GM12878 (cell line): ENCODE measurements at regions of chr6 and their contacts with region 1.

Region 1: DNA sequence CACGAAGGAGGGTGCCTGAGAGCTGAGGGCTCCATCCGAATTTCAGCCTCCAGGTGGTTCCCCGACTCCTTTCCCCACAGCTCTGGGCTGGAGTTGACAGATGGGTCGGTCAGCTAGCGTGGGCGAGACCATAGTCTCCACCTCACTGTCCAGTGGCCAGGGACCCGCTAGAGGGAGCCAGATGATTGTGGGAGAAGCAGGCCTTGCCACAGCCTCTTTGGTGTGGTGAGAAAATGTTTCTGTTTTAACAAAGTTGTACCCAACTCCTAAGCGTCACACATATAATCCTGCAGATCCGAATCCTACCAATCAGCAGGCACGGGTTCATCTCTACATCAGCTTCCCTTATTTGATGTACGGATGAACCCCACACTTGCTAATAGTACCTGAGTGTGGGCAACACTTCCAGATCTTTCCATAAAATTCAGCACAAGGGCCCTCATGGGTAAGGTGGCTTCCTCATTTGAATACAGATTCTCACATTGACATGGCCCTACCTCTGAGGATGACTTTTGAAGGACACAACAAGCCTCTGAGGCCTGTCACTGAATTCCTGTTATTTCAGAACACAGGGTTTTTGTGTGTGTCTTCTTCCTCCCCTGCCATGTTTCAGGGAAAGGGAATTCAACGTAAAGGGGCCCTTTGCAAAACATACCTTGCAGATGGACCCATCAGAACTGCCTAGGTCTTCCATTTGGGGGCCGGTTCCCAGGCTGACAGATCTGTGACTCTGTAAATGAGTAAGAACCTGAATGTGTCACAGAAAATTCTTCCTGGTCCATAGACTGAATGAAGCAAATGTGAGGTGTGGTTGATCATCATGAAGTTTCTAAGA is 103.2 kb upstream of the DUSP22 start:
- DNase-seq: peak; percentile 94
- ATAC-seq: peak; percentile 90
- H3K4me3 ChIP-seq: no peak overlapping the region
- H3K27ac ChIP-seq: peak overlapping the region; percentile 98
- H3K4me1 ChIP-seq: peaks cover 72% of the 10 kb centered on the region
- H3K27me3 ChIP-seq: no peaks in the 10 kb centered on the region; a peak in 1 of 4 replicates
- CTCF ChIP-seq: peak; percentile 93 to 96 (median 95)
- EP300 ChIP-seq: peak; percentile 44 to 58; a peak in 3 of 4 replicates
- POLR2A ChIP-seq: no peak
- RAD21 ChIP-seq: peak; percentile 97

Region 2: DNA sequence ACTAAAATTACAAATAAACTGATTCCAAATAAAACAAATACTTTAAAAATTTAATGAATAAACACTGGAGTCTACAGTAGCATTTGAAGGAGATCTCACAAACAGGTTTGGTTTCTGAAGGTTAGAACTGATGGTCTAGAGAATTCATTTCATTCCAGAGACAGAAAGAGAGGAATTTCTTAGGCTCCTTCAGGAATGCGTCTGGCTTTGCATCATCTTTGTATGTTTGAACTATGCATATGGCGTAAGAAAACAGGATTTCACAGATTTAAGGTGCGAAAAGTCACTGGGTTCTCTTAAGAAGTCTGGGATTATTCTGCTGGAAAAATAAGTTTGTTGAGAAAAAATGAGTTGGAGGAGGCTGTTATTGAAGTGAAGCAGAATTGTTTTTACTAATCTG is 36.6 kb before region 1 on chr6:
- CTCF ChIA-PET with region 1: interaction called, 16 read pairs
- POLR2A ChIA-PET with region 1: no interaction called
- RAD21 ChIA-PET with region 1: interaction called, 5 read pairs
- SMC1A ChIA-PET with region 1: interaction called, 4 read pairs
- in situ Hi-C with region 1: no loop called
- intact Hi-C with region 1: no loop called
- DNase-seq: no peak
- ATAC-seq: no peak
- H3K4me3 ChIP-seq: no peak overlapping the region
- H3K27ac ChIP-seq: no peak overlapping the region; the same call in 1 of the 2 replicates
- H3K4me1 ChIP-seq: peaks cover 55% of the 10 kb centered on the region
- H3K27me3 ChIP-seq: no peaks in the 10 kb centered on the region
- CTCF ChIP-seq: no peak
- EP300 ChIP-seq: no peak
- POLR2A ChIP-seq: no peak
- RAD21 ChIP-seq: no peak

Region 3: GRCh38 chr6:286681-287488 is 97.8 kb after region 1 on chr6:
- CTCF ChIA-PET with region 1: interaction called, 20 read pairs
- POLR2A ChIA-PET with region 1: interaction called, 3 read pairs
- RAD21 ChIA-PET with region 1: interaction called, 9 read pairs
- SMC1A ChIA-PET with region 1: interaction called, 11 read pairs
- in situ Hi-C with region 1: no loop called
- intact Hi-C with region 1: loop called (anchors 1 kb)
- DNase-seq: no peak
- ATAC-seq: peak; percentile 48
- H3K4me3 ChIP-seq: peak overlapping the region; percentile 2; the same call in 1 of the 2 replicates
- H3K27ac ChIP-seq: peak overlapping the region; percentile 53
- H3K4me1 ChIP-seq: peaks cover 54% of the 10 kb centered on the region
- H3K27me3 ChIP-seq: no peaks in the 10 kb centered on the region
- CTCF ChIP-seq: no peak
- EP300 ChIP-seq: 0 out of 4 replicates have a peak, but pooled peaks have one; percentile 42 to 61
- POLR2A ChIP-seq: no peak
- RAD21 ChIP-seq: 0 out of 2 replicates have a peak, but pooled peaks have one; percentile 7

Region 4: GRCh38 chr6:319177-320131 is 130.4 kb after region 1 on chr6:
- CTCF ChIA-PET with region 1: interaction called, 4 read pairs
- POLR2A ChIA-PET with region 1: interaction called, 3 read pairs
- RAD21 ChIA-PET with region 1: interaction called, 16 read pairs
- SMC1A ChIA-PET with region 1: interaction called, 15 read pairs
- in situ Hi-C with region 1: no loop called
- intact Hi-C with region 1: loop called (anchors 5 kb)
- DNase-seq: peak; percentile 95
- ATAC-seq: peak; percentile 50
- H3K4me3 ChIP-seq: peak overlapping the region; percentile 57
- H3K27ac ChIP-seq: peak overlapping the region; percentile 92
- H3K4me1 ChIP-seq: peaks cover 98% of the 10 kb centered on the region
- H3K27me3 ChIP-seq: no peaks in the 10 kb centered on the region
- CTCF ChIP-seq: no peak
- EP300 ChIP-seq: peak; percentile 72 to 85; a peak in 3 of 4 replicates
- POLR2A ChIP-seq: no peak
- RAD21 ChIP-seq: no peak

Region 5: GRCh38 chr6:391559-392440 is 202.8 kb after region 1 on chr6 and contains the start of gene IRF4:
- CTCF ChIA-PET with region 1: interaction called, 33 read pairs
- POLR2A ChIA-PET with region 1: interaction called, 4 read pairs
- RAD21 ChIA-PET with region 1: interaction called, 15 read pairs
- SMC1A ChIA-PET with region 1: interaction called, 41 read pairs
- in situ Hi-C with region 1: loop called (anchors 5 kb)
- intact Hi-C with region 1: loop called (anchors 1 kb)
- DNase-seq: no peak
- ATAC-seq: peak; percentile 63
- H3K4me3 ChIP-seq: peak within 1 kb of the TSS; percentile 95
- H3K27ac ChIP-seq: peak within 1 kb of the TSS; percentile 97
- H3K4me1 ChIP-seq: peaks cover 33% of the 10 kb centered on the region
- H3K27me3 ChIP-seq: no peaks in the 10 kb centered on the region
- CTCF ChIP-seq: no peak
- EP300 ChIP-seq: no peak
- POLR2A ChIP-seq: peak; percentile 77
- RAD21 ChIP-seq: peak; percentile 25; the same call in 1 of the 2 replicates
- polyA plus RNA-seq, gene IRF4: 50.0 to 98.9 TPM

Region 6: GRCh38 chr6:490251-491037 is 301.4 kb after region 1 on chr6:
- CTCF ChIA-PET with region 1: interaction called, 6 read pairs
- POLR2A ChIA-PET with region 1: no interaction called
- RAD21 ChIA-PET with region 1: interaction called, 11 read pairs
- SMC1A ChIA-PET with region 1: no interaction called
- in situ Hi-C with region 1: no loop called
- intact Hi-C with region 1: no loop called
- DNase-seq: peak; percentile 39
- ATAC-seq: peak; percentile 82
- H3K4me3 ChIP-seq: no peak overlapping the region
- H3K27ac ChIP-seq: peak overlapping the region; percentile 22; the same call in 1 of the 2 replicates
- H3K4me1 ChIP-seq: peaks cover 33% of the 10 kb centered on the region
- H3K27me3 ChIP-seq: no peaks in the 10 kb centered on the region
- CTCF ChIP-seq: no peak
- EP300 ChIP-seq: no peak
- POLR2A ChIP-seq: no peak
- RAD21 ChIP-seq: no peak

Region 7: GRCh38 chr6:842141-842540 is 653.1 kb after region 1 on chr6:
- CTCF ChIA-PET with region 1: no interaction called
- POLR2A ChIA-PET with region 1: no interaction called
- RAD21 ChIA-PET with region 1: no interaction called
- SMC1A ChIA-PET with region 1: no interaction called
- in situ Hi-C with region 1: no loop called
- intact Hi-C with region 1: no loop called
- DNase-seq: no peak
- ATAC-seq: no peak
- H3K4me3 ChIP-seq: no peak overlapping the region
- H3K27ac ChIP-seq: no peak overlapping the region
- H3K4me1 ChIP-seq: no peaks in the 10 kb centered on the region
- H3K27me3 ChIP-seq: peaks cover 0 to 3% of the 10 kb centered on the region in 2 experiments; a peak in 1 of 4 replicates
- CTCF ChIP-seq: no peak
- EP300 ChIP-seq: no peak
- POLR2A ChIP-seq: no peak
- RAD21 ChIP-seq: no peak